ENCODE measurements at regions of chr13 and their contacts with region 1.

Region 1: GRCh38 chr13:31797154-31797775 is 57.9 kb downstream of the RXFP2 start:
- DNase-seq: peak; percentile 61
- H3K4me3 ChIP-seq: no peak overlapping the region
- H3K27ac ChIP-seq: no peak overlapping the region
- H3K4me1 ChIP-seq: peaks cover 0 to 4% of the 10 kb centered on the region in 2 experiments; a peak in 2 of 4 replicates
- H3K27me3 ChIP-seq: no peaks in the 10 kb centered on the region
- CTCF ChIP-seq: peak; percentile 68
- EP300 ChIP-seq: no peak
- RAD21 ChIP-seq: peak; percentile 79

Region 2: GRCh38 chr13:30892966-30893365 is 904.3 kb before region 1 on chr13:
- CTCF ChIA-PET with region 1: no interaction called
- POLR2A ChIA-PET with region 1: no interaction called
- DNase-seq: no peak
- H3K4me3 ChIP-seq: no peak overlapping the region
- H3K27ac ChIP-seq: no peak overlapping the region
- H3K4me1 ChIP-seq: peaks cover 0 to 11% of the 10 kb centered on the region in 2 experiments; a peak in 1 of 4 replicates
- H3K27me3 ChIP-seq: no peaks in the 10 kb centered on the region
- CTCF ChIP-seq: peak; percentile 62
- EP300 ChIP-seq: no peak
- RAD21 ChIP-seq: no peak

Region 3: GRCh38 chr13:31431722-31432137 is 365.5 kb before region 1 on chr13:
- CTCF ChIA-PET with region 1: interaction called, 20 read pairs
- POLR2A ChIA-PET with region 1: no interaction called
- DNase-seq: peak; percentile 46
- H3K4me3 ChIP-seq: no peak overlapping the region
- H3K27ac ChIP-seq: no peak overlapping the region
- H3K4me1 ChIP-seq: peaks cover 0 to 6% of the 10 kb centered on the region in 2 experiments; a peak in 2 of 4 replicates
- H3K27me3 ChIP-seq: no peaks in the 10 kb centered on the region
- CTCF ChIP-seq: peak; percentile 71
- EP300 ChIP-seq: no peak
- RAD21 ChIP-seq: peak; percentile 75

Region 4: GRCh38 chr13:31786011-31786410 is 11.3 kb before region 1 on chr13:
- CTCF ChIA-PET with region 1: interaction called, 11 read pairs
- POLR2A ChIA-PET with region 1: no interaction called
- DNase-seq: no peak
- H3K4me3 ChIP-seq: no peak overlapping the region
- H3K27ac ChIP-seq: no peak overlapping the region
- H3K4me1 ChIP-seq: no peaks in the 10 kb centered on the region
- H3K27me3 ChIP-seq: no peaks in the 10 kb centered on the region
- CTCF ChIP-seq: no peak
- EP300 ChIP-seq: no peak
- RAD21 ChIP-seq: no peak

Region 5: DNA sequence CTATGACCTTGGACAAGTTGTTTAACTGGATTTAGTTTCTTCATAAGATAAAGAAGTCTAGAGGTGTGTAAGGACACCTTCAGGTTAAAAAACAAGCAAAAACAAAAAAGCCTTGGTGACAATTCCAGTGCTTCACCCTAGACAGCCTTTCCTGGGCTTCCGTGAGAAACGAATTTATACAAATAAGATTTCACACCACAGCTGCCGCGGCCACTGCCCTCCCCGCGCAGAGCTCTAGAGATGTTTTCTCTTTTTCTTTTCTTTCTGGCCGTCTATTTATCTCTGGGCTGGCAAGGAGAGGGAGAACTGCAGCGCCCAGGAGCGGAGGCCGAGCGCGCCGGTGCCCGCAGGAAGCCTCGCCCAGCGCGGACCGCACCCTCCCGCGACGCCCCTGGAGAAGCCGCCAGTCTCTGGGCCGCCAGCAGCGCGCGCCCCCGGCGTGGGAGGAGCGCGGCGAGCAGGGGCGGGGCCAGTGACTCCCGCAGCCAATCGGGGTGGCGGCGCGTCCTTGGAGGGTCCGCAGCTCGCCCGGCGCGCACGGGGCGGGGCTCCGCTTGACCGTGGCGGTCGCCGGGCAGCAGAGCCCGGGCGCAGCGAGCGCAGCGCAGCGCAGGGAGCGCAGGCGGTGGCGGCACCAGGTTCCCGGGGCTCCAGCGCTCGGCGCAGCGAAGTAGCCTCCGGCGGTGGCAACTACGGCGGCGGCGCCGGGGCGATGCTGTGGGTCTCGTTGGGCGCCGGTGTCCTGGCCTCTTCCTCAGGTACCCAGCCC is 49.1 kb after region 1 on chr13:
- CTCF ChIA-PET with region 1: no interaction called
- POLR2A ChIA-PET with region 1: no interaction called
- DNase-seq: peak; percentile 98
- H3K4me3 ChIP-seq: peak overlapping the region; percentile 70 to 71
- H3K27ac ChIP-seq: peak overlapping the region in 1 of 2 experiments; percentile 71; a peak in 2 of 4 replicates
- H3K4me1 ChIP-seq: peaks cover 0 to 4% of the 10 kb centered on the region in 2 experiments; a peak in 1 of 4 replicates
- H3K27me3 ChIP-seq: peaks cover 4% of the 10 kb centered on the region; the same call in 1 of the 2 replicates
- CTCF ChIP-seq: no peak
- EP300 ChIP-seq: no peak
- RAD21 ChIP-seq: no peak